Activated CD4-positive, alpha-beta T cell treated with anti-CD3 and anti-CD28 coated beads for 36 hours (primary cell): ENCODE measurements at regions of chr6 and their contacts with region 1.

Region 1: DNA sequence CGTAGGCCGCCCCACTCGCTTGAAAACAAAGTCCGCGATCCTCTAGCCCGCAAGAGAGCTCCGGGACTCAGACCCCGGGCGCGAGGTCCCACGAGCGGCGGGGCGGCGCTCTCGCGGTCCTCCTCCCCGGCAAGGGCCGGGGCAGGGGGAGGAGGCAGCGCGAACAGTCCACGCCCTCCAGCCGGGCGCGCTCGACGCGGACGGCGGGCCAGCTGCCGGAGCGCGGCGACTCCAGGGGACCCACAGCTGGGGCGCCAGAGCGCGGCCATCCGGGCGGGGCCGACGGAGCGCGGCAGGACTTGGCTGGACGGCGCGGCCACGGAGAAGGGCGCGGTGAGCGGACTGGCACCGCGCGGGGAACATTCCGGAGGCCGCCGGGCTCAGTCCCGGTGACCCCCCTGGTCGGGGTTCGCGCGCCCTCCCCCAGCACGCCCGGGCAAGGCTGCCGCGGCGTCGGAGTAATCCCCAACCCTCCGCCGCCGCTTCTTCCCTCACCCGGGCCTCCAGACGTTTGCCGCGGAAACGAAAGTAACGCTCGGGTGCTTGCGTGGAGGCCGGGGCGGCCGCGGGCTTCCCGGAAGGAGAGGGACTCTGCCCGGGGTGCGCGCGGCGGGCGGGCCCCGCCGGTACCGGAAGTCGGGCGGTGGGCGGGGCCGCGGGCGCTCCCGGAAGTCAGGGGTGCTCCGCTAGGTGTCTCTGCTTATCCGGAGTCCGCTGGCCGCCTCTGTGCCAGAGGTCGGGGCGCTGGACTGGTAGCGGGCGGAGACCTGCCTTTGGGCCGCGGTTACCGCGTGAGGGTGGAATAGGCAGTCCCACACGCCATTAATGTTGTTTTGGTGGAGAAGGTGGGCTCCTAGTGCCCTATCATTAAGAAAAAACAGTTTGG is at the start of gene RIPK1:
- DNase-seq: peak; percentile 97
- ATAC-seq: peak; percentile 84
- H3K4me3 Mint-ChIP-seq: peak within 1 kb of the TSS; percentile 96
- H3K27ac Mint-ChIP-seq: peak within 1 kb of the TSS; percentile 98
- H3K4me1 Mint-ChIP-seq: peaks cover 61% of the 10 kb centered on the region
- H3K27me3 Mint-ChIP-seq: no peaks in the 10 kb centered on the region
- total RNA-seq, gene RIPK1: 17.4 to 19.3 TPM

Region 2: DNA sequence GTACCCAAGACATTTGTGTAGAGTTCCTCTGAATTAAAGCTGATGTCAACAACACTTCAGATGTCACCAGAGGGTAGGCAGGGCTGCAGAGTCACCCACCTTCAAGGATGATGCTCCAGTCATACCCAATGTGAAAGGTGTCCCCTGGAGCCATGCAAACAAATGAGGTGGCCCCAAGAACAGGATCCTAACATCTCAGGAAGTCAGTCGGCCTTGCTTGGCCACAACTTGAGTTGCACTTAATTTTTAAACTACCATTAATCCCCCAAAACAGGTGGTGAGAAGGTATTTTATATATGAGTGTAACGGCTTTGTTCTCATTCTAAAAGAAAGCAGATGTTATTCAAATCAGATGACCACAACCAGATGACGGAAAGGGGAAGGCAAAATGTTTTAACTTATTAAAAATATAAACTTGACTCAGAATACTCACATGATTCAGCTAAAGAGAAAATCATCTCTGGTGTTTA is 205.8 kb before region 1 on chr6:
- CTCF ChIA-PET with region 1: no interaction called
- POLR2A ChIA-PET with region 1: interaction called, 10 read pairs
- intact Hi-C with region 1: no loop called
- DNase-seq: peak; percentile 77
- ATAC-seq: peak; percentile 54
- H3K4me3 Mint-ChIP-seq: peak overlapping the region; percentile 66
- H3K27ac Mint-ChIP-seq: peak overlapping the region; percentile 99
- H3K4me1 Mint-ChIP-seq: peaks cover 80% of the 10 kb centered on the region
- H3K27me3 Mint-ChIP-seq: no peaks in the 10 kb centered on the region

Region 3: DNA sequence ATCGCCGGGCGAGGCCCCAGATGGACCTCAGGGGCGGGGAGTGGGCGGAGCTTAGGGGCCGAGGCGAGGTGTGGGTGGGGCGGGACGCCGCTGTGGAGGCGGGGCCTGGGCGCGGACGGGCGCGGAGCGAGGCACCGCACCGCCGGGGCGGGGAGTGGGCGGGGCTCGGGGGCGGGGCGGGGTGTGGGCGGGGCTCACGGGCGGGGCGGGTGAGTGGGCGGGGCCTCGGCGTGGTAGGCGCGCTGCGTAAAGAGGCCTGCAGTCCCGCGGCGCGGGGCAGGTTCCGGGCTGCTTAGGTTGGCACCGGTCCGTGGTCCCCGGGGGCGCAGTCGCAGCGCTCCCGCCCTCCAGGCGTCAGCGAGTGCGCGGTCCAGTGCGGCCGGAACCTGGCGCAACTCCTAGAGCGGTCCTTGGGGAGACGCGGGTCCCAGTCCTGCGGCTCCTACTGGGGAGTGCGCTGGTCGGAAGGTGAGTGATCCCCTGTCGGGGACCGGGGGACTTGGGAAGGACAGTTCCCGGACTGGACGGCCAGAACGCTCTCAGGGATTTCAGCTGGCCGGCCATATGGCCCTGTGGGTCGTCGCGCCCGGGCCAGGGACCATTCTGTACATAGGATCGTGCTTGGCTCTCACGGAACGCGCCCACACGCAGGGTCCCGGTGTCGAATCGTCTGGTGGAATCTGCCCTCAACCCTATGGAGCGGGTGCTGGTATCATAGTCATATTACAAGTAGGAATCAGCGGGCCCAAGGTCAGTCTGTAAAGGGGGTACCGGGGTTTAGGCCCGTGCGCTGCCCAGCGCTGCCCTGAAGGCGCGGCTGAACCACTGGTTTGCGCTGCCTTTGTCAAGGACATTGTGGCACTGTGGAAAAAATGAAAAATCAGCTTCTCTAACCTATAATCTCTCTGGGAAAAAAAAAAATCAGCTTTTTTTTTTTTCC is 68.7 kb before region 1 on chr6 and contains the start of gene NQO2:
- CTCF ChIA-PET with region 1: interaction called, 8 read pairs
- POLR2A ChIA-PET with region 1: interaction called, 4 read pairs
- intact Hi-C with region 1: loop called in 1 of 2 experiments (anchors 1 kb)
- DNase-seq: peak; percentile 96
- ATAC-seq: peak; percentile 80
- H3K4me3 Mint-ChIP-seq: peak within 1 kb of the TSS; percentile 83
- H3K27ac Mint-ChIP-seq: peak within 1 kb of the TSS; percentile 82
- H3K4me1 Mint-ChIP-seq: peaks cover 28% of the 10 kb centered on the region
- H3K27me3 Mint-ChIP-seq: no peaks in the 10 kb centered on the region
- total RNA-seq, gene NQO2: 40.7 to 44.2 TPM

Region 4: GRCh38 chr6:3102875-3103274 is 34.3 kb after region 1 on chr6:
- CTCF ChIA-PET with region 1: no interaction called
- POLR2A ChIA-PET with region 1: no interaction called
- intact Hi-C with region 1: no loop called
- DNase-seq: no peak
- ATAC-seq: peak; percentile 91
- H3K4me3 Mint-ChIP-seq: no peak overlapping the region
- H3K27ac Mint-ChIP-seq: no peak overlapping the region
- H3K4me1 Mint-ChIP-seq: peaks cover 9% of the 10 kb centered on the region
- H3K27me3 Mint-ChIP-seq: no peaks in the 10 kb centered on the region

Region 5: DNA sequence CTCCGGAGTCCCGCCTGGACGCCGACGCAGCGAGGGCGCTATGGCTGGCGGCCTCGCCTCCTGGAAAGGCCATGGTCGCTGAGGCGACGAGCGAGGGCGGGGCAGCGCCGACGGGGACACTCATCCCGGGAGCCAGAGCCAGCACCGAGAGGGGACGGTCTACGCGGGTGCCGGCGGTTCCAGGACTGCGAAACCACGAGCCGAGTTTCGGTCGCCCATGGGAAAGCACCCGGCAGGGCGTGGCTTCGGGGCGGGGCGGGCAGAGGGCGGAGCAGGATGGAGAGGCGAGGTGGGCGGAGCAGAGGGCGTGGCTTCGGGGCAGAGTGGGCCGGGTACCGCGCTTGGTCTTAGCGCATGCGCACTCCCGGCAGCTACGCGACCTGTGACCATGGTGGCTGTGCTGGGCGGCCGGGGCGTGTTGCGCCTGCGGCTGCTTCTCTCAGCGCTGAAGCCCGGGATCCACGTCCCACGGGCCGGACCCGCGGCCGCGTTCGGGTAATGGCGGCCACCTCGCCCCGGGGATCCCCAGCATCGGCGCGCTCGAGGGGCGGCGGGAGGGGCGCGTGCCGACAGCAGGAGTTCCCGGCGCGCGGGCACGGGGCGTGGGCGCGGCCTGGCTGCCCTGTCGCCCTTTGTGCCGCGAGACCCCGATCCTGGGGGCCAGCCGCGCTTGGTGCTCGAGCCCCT is 49.9 kb after region 1 on chr6 and contains the start of gene BPHL:
- CTCF ChIA-PET with region 1: no interaction called
- POLR2A ChIA-PET with region 1: no interaction called
- intact Hi-C with region 1: loop called (anchors 1 kb)
- DNase-seq: peak; percentile 100
- ATAC-seq: peak; percentile 90
- H3K4me3 Mint-ChIP-seq: peak within 1 kb of the TSS; percentile 76
- H3K27ac Mint-ChIP-seq: peak within 1 kb of the TSS; percentile 60
- H3K4me1 Mint-ChIP-seq: peaks cover 22% of the 10 kb centered on the region
- H3K27me3 Mint-ChIP-seq: no peaks in the 10 kb centered on the region
- total RNA-seq, gene BPHL: 15.8 to 16.7 TPM

Region 6: DNA sequence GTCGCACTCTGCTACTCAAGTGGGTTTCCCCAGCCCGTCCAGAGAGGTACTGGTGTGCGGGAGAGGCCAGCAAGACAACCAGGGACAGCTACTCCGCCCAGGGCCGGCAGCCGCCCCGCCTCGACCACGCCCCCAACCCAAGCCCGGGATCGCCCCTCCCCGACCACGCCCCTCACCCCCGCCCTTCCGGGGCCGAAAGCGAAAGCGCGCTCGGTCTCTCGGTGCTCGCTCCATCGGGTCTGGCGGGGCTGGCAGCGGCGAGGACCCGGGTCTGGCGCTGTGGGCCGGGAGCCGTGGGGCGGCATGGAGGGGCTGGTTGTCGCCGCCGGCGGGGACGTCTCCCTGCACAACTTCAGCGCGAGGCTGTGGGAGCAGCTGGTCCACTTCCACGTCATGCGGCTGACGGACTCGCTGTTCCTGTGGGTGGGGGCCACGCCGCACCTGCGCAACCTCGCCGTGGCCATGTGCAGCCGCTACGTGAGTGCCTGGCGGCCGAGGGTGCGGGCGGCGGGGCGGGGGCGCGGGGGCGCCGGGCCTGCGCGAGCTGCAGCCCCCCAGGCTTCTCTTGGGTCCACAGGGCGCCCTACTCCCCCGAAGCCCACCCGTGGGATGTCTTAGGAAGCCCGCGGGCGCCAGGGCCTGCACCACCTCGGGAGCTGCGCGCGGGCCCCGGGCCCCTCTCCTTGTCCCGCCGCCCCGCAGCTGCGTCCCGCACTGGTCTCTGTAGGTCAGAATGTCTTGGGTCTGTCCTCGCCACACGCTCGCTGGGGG is 190.3 kb after region 1 on chr6 and contains the start of gene PSMG4:
- CTCF ChIA-PET with region 1: no interaction called
- POLR2A ChIA-PET with region 1: interaction called, 12 read pairs
- intact Hi-C with region 1: loop called in 1 of 2 experiments (anchors 1 kb)
- DNase-seq: peak; percentile 97
- ATAC-seq: peak; percentile 83
- H3K4me3 Mint-ChIP-seq: peak within 1 kb of the TSS; percentile 89
- H3K27ac Mint-ChIP-seq: peak within 1 kb of the TSS; percentile 92
- H3K4me1 Mint-ChIP-seq: peaks cover 35% of the 10 kb centered on the region
- H3K27me3 Mint-ChIP-seq: peaks cover 3% of the 10 kb centered on the region
- total RNA-seq, gene PSMG4: 22.2 to 23.2 TPM

Region 7: DNA sequence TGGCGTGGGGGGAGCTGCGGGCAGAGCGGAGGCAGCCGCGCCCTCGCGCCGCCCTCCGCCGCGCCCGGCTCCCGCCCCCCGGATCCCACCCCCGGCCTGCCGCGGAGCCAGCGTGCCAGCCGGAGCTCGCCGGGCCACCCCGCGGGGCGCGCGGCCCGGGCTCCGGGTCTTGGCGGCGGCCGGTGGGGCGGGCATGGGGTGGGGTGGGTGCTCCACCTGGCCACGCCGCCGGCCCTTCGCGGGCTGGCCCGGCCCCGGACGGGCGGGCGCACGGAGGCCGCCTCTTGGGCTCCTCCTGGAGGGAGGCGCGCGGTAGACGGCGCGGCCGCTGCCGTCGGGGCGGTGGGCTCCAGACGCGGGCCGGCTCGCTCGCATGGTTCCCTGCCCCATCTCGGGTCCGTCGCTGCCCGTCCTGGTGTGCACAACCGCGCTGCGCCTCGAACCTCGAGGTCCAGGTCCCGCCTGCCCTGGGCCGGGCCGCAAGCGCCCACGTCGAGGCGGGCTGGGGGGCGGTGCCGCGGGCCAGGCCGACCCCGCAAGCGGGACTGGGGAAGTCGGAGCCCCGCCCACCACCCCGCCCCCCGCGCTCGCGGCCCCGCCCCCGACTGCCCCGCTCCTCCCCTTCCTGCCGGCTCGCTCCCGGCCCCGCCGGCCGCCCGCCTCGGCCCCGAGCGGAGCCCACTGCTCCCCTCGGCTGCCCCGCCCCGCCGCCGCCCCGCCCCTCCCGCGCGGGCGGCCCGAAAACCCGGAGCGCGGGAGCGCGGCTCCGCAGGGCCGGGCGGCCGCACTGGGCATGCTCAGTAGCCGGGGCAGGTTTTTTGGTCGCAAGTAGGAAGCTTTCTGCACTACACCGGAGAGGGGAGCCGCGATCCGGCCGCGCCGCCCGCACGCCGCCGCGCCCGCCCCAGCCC is 1707.3 kb after region 1 on chr6 and contains the start of gene CDYL:
- CTCF ChIA-PET with region 1: no interaction called
- POLR2A ChIA-PET with region 1: no interaction called
- intact Hi-C with region 1: loop called in 1 of 2 experiments (anchors 5 kb)
- DNase-seq: peak; percentile 93
- ATAC-seq: peak; percentile 79
- H3K4me3 Mint-ChIP-seq: peak within 1 kb of the TSS; percentile 81
- H3K27ac Mint-ChIP-seq: peak within 1 kb of the TSS; percentile 92
- H3K4me1 Mint-ChIP-seq: peaks cover 54% of the 10 kb centered on the region
- H3K27me3 Mint-ChIP-seq: peaks cover 11% of the 10 kb centered on the region
- total RNA-seq, gene CDYL: 22.1 to 33.7 TPM